Activated CD8-positive, alpha-beta T cell treated with anti-CD3 and anti-CD28 coated beads for 36 hours (primary cell): ENCODE measurements at regions of chr16 and their contacts with region 1.

Region 1: GRCh38 chr16:75519881-75520280 is 16.0 kb downstream of the CHST5 start:
- DNase-seq: no peak
- ATAC-seq: no peak
- H3K4me3 Mint-ChIP-seq: no peak overlapping the region
- H3K27ac Mint-ChIP-seq: no peak overlapping the region
- H3K4me1 Mint-ChIP-seq: peaks cover 10% of the 10 kb centered on the region
- H3K27me3 Mint-ChIP-seq: no peaks in the 10 kb centered on the region
- CTCF ChIP-seq: no peak

Region 2: DNA sequence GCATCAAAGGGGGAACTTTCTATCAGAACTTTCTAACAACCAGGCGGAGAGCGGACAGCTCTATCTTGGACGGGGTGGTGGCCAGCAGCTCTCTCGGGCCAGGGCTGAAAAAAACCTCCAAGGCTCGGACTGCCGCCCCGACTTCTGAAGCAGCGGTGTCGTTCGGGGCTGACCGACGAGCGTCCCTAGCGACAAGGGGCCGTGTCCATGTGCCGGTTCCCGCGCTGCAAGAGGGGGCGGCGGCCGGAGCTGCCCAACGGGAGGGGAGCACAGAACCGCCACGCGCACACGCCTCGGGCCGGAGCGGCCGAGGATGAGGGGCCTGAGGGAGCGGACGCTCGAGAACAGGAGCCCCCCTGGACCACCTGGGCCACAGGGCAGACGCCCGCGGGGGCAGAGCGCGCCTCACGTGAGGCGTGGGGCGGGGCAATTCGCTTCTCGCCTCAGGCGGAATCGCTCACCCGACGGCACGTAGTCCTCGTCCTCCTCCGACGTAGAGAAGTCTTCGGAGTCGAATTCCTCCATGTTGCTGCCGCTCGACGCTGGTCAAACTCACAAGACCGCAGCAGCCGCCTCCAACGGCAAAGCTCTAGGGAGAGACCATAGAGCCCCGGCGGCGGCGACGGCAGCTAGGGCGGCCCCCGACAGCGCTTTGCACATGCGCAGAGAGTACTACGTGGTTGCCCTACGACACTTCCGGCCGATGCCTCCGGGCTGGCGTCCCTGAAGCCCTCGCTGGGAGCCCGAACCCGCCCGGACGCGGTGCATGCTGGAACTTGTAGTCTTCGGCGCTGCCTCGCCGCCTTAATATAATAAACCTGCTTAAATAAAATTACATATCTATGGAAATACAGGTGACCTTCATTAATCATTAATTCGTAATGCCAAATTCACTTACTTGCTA is 86.8 kb before region 1 on chr16 and contains the start of gene CFDP1:
- CTCF ChIA-PET with region 1: interaction called, 13 read pairs
- POLR2A ChIA-PET with region 1: no interaction called
- intact Hi-C with region 1: no loop called
- DNase-seq: peak; percentile 96
- ATAC-seq: peak; percentile 92
- H3K4me3 Mint-ChIP-seq: peak within 1 kb of the TSS; percentile 77
- H3K27ac Mint-ChIP-seq: peak within 1 kb of the TSS; percentile 94
- H3K4me1 Mint-ChIP-seq: peaks cover 29% of the 10 kb centered on the region
- H3K27me3 Mint-ChIP-seq: no peaks in the 10 kb centered on the region
- CTCF ChIP-seq: no peak
- total RNA-seq, gene CFDP1: 34.7 to 39.9 TPM

Region 3: GRCh38 chr16:75471723-75472633 is 47.9 kb before region 1 on chr16:
- CTCF ChIA-PET with region 1: interaction called, 40 read pairs
- POLR2A ChIA-PET with region 1: no interaction called
- intact Hi-C with region 1: no loop called
- DNase-seq: peak; percentile 41
- ATAC-seq: peak; percentile 87
- H3K4me3 Mint-ChIP-seq: no peak overlapping the region
- H3K27ac Mint-ChIP-seq: no peak overlapping the region
- H3K4me1 Mint-ChIP-seq: peaks cover 1% of the 10 kb centered on the region
- H3K27me3 Mint-ChIP-seq: no peaks in the 10 kb centered on the region
- CTCF ChIP-seq: peak; percentile 85

Region 4: DNA sequence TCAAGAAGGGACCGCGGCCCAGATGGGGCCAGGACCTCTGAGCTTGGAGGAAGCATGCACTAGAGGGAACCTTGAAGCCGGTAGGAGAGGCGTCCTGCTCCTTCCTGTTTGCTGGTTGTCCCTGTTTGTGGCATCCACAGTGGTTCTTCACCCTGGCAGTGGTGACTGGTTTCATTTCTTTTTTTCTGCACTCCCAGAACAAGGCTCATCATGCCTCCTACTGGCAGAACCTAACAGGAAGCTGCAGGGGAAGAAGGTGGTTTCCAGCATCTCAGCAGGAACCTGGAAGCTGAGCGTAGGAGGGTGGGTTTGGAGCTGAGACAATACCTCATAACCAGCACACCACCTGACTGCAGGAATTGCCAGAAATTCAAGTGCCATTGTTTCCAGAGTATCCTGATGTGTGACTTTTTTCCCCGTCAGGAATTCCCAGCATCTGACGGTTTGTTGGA is 30.4 kb after region 1 on chr16:
- CTCF ChIA-PET with region 1: interaction called, 19 read pairs
- POLR2A ChIA-PET with region 1: no interaction called
- intact Hi-C with region 1: no loop called
- DNase-seq: peak; percentile 47
- ATAC-seq: peak; percentile 72
- H3K4me3 Mint-ChIP-seq: no peak overlapping the region
- H3K27ac Mint-ChIP-seq: no peak overlapping the region
- H3K4me1 Mint-ChIP-seq: no peaks in the 10 kb centered on the region
- H3K27me3 Mint-ChIP-seq: peaks cover 6% of the 10 kb centered on the region
- CTCF ChIP-seq: peak; percentile 29

Region 5: GRCh38 chr16:75576384-75576811 is 56.5 kb after region 1 on chr16:
- CTCF ChIA-PET with region 1: no interaction called
- POLR2A ChIA-PET with region 1: no interaction called
- intact Hi-C with region 1: no loop called
- DNase-seq: no peak
- ATAC-seq: no peak
- H3K4me3 Mint-ChIP-seq: no peak overlapping the region
- H3K27ac Mint-ChIP-seq: peak overlapping the region; percentile 60
- H3K4me1 Mint-ChIP-seq: peaks cover 39% of the 10 kb centered on the region
- H3K27me3 Mint-ChIP-seq: no peaks in the 10 kb centered on the region
- CTCF ChIP-seq: no peak

Region 6: DNA sequence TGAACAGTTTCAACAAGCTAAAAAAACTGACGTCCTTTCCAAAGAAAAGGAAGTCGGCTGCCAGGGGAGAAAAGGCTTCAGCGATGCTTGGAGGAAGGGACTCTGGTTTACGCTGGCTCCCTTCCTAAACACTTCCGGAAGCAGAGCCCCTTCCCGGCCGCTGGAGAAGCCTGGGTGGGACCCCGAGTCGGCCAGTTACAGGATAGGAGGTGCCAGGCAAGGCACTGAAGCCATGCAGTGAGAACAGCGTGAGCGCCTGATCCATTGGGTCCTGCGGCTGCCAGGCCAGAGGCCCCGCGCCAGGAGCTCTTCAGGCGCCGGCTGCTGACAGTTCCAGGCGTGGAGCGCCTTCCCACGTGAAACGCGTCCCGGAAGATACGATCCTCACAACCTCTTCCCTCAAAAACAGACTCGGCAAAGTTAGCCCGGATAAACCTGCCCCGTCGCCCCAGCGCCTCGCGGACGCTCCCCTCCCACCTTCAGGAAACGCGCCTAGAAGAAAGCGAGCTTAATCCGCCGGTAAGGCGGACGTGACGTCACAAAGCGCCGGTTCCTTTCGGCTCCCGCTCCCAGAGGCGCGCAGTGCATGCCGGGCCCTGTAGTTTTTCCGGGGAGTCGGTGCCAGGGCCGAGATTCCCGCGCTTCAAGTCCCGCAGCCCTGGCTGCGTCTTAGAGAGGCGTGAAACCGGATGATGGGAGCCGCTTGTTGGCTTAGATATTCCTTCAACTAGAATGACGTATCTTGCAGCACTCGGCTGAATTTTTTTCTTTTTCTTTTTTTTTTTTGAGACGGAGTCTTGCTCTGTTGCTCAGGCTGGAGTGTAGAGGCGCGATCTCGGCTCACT is 103.1 kb after region 1 on chr16 and contains the start of gene ADAT1:
- CTCF ChIA-PET with region 1: interaction called, 18 read pairs
- POLR2A ChIA-PET with region 1: interaction called, 3 read pairs
- intact Hi-C with region 1: no loop called
- DNase-seq: peak; percentile 99
- ATAC-seq: peak; percentile 93
- H3K4me3 Mint-ChIP-seq: peak within 1 kb of the TSS; percentile 97
- H3K27ac Mint-ChIP-seq: peak within 1 kb of the TSS; percentile 96
- H3K4me1 Mint-ChIP-seq: peaks cover 45% of the 10 kb centered on the region
- H3K27me3 Mint-ChIP-seq: no peaks in the 10 kb centered on the region
- CTCF ChIP-seq: no peak
- total RNA-seq, gene ADAT1: 41.7 to 43.6 TPM

Region 7: GRCh38 chr16:75718452-75718851 is 198.6 kb after region 1 on chr16:
- CTCF ChIA-PET with region 1: no interaction called
- POLR2A ChIA-PET with region 1: no interaction called
- intact Hi-C with region 1: no loop called
- DNase-seq: no peak
- ATAC-seq: no peak
- H3K4me3 Mint-ChIP-seq: no peak overlapping the region
- H3K27ac Mint-ChIP-seq: no peak overlapping the region
- H3K4me1 Mint-ChIP-seq: no peaks in the 10 kb centered on the region
- H3K27me3 Mint-ChIP-seq: peaks cover 10% of the 10 kb centered on the region
- CTCF ChIP-seq: no peak